ENCODE measurements at regions of chr2 and their contacts with region 1.

Region 1: GRCh38 chr2:24521975-24522639 is 31.1 kb downstream of the NCOA1 start:
- DNase-seq: no peak
- ATAC-seq: peak; percentile 93
- H3K4me3 Mint-ChIP-seq: peak overlapping the region; percentile 51
- H3K27ac Mint-ChIP-seq: peak overlapping the region; percentile 90
- H3K4me1 Mint-ChIP-seq: peaks cover 48% of the 10 kb centered on the region
- H3K27me3 Mint-ChIP-seq: no peaks in the 10 kb centered on the region

Region 2: GRCh38 chr2:24088821-24089359 is 433.2 kb before region 1 on chr2:
- CTCF ChIA-PET with region 1: no interaction called
- POLR2A ChIA-PET with region 1: no interaction called
- intact Hi-C with region 1: no loop called
- DNase-seq: no peak
- ATAC-seq: no peak
- H3K4me3 Mint-ChIP-seq: no peak overlapping the region
- H3K27ac Mint-ChIP-seq: no peak overlapping the region
- H3K4me1 Mint-ChIP-seq: peaks cover 8% of the 10 kb centered on the region
- H3K27me3 Mint-ChIP-seq: no peaks in the 10 kb centered on the region

Region 3: DNA sequence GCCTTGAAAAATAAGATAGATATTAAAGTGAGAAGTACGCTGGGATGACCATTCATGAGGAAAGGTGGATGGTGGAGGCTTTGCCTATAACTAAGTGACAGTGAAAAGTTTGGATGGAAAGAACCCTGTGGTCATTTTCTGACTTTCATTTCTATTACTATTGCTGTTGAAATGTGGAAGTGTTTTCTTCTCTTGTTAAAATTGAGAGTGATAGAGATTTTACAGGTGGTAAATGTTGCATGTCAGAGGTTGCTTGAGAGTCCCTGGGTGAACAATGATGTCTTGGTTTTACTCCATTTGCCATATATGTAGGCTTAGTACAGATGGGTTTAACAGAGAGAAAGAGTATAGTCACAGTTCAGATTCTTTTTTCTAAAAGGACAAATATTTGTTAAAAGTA is 12.7 kb before region 1 on chr2:
- CTCF ChIA-PET with region 1: no interaction called
- POLR2A ChIA-PET with region 1: no interaction called
- intact Hi-C with region 1: loop called in 1 of 2 experiments (anchors 1 kb)
- DNase-seq: no peak
- ATAC-seq: peak; percentile 70
- H3K4me3 Mint-ChIP-seq: no peak overlapping the region
- H3K27ac Mint-ChIP-seq: no peak overlapping the region
- H3K4me1 Mint-ChIP-seq: peaks cover 71% of the 10 kb centered on the region
- H3K27me3 Mint-ChIP-seq: no peaks in the 10 kb centered on the region